ENCODE measurements at regions of chr2 and their contacts with region 1.

Region 1: GRCh38 chr2:7097348-7097895 is 180.2 kb downstream of the RNF144A start:
- DNase-seq: peak; percentile 84
- H3K4me3 Mint-ChIP-seq: peak overlapping the region; percentile 58
- H3K27ac Mint-ChIP-seq: no peak overlapping the region
- H3K4me1 Mint-ChIP-seq: peaks cover 7% of the 10 kb centered on the region
- H3K27me3 Mint-ChIP-seq: no peaks in the 10 kb centered on the region

Region 2: GRCh38 chr2:7071916-7072556 is 25.4 kb before region 1 on chr2:
- CTCF ChIA-PET with region 1: no interaction called
- intact Hi-C with region 1: no loop called
- DNase-seq: no peak
- H3K4me3 Mint-ChIP-seq: no peak overlapping the region
- H3K27ac Mint-ChIP-seq: no peak overlapping the region
- H3K4me1 Mint-ChIP-seq: peaks cover 4% of the 10 kb centered on the region
- H3K27me3 Mint-ChIP-seq: no peaks in the 10 kb centered on the region

Region 3: GRCh38 chr2:7203055-7203467 is 105.6 kb after region 1 on chr2:
- CTCF ChIA-PET with region 1: interaction called, 3 read pairs
- intact Hi-C with region 1: loop called (anchors 2 kb)
- DNase-seq: peak; percentile 77
- H3K4me3 Mint-ChIP-seq: no peak overlapping the region
- H3K27ac Mint-ChIP-seq: no peak overlapping the region
- H3K4me1 Mint-ChIP-seq: no peaks in the 10 kb centered on the region
- H3K27me3 Mint-ChIP-seq: no peaks in the 10 kb centered on the region

Region 4: GRCh38 chr2:7744827-7745226 is 647.4 kb after region 1 on chr2:
- CTCF ChIA-PET with region 1: interaction called, 3 read pairs
- intact Hi-C with region 1: loop called (anchors 5 kb)
- DNase-seq: peak; percentile 29
- H3K4me3 Mint-ChIP-seq: no peak overlapping the region
- H3K27ac Mint-ChIP-seq: no peak overlapping the region
- H3K4me1 Mint-ChIP-seq: peaks cover 11% of the 10 kb centered on the region
- H3K27me3 Mint-ChIP-seq: peaks cover 1% of the 10 kb centered on the region

Region 5: DNA sequence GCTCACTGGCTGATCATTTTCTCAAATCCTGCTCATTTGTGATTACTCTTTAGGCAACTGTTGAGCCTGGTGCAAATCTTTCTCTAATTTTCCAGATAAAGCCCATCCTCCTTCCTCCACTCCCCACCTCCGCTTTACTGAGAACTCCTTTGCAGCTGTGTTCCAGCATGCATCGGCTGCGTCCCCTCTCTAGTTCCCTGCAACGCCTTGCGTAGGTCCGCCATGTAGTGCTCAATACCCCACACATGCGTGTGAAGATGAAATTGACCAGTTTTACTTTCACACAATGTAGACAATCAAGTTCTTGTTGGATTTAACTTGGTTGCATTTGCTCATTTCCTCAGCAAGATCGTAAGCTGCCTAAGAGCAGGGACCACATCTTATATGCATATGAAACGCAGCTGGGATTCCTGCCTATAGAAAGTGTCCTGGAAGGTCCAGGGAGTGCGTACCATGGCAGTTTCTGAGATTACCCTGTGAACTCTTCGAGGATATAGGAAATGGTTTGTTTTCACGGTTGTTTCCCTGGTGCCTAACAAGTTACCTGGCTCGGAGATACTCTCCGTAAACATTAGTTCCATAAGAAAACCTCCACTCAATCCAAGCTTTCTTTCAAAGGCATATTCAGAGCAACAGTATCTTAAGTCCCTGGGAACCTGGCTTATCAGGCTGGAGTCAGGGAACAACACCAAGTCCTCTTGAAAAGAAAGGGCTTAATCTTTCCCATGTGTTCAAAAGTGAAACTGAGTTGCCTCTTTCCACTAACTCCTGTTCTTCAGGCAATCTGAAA is 818.1 kb after region 1 on chr2:
- CTCF ChIA-PET with region 1: no interaction called
- intact Hi-C with region 1: no loop called
- DNase-seq: no peak
- H3K4me3 Mint-ChIP-seq: no peak overlapping the region
- H3K27ac Mint-ChIP-seq: no peak overlapping the region
- H3K4me1 Mint-ChIP-seq: no peaks in the 10 kb centered on the region
- H3K27me3 Mint-ChIP-seq: no peaks in the 10 kb centered on the region